AG04449 (cell line): ENCODE measurements at regions of chr12 and their contacts with region 1.

Region 1: DNA sequence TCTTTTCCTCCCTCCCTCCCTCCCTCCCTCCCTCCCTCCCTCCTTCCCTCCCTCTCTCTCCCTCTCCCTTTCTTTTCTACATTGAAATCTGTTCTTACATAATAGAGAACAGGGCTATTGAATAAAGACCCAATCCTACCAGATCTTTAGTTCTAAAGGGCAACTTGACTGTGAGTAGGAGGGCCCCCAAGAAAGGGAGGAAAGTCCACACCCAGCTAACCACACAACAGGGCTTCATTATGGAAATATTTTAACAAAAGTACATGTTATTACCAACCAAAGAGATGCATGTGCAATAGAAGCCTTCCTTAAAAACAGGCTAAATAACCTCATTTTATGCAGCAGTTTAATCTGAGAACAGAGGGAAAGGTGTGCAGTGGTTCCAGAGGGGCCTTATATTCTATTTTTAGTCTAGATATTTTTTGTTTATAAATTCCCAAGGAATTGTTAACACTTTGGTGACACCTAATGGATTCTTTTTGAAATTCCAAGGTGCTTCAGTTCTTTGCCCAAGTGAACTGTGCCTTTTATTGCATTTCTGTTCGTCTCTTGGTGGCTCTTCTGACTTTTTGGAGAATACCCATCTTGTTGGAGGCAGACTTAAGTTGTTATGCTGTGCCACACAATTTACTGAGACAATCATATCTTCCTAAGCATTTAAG is 63.0 kb downstream of the GNS start:
- DNase-seq: no peak
- H3K4me3 ChIP-seq: no peak overlapping the region
- CTCF ChIP-seq: no peak

Region 2: DNA sequence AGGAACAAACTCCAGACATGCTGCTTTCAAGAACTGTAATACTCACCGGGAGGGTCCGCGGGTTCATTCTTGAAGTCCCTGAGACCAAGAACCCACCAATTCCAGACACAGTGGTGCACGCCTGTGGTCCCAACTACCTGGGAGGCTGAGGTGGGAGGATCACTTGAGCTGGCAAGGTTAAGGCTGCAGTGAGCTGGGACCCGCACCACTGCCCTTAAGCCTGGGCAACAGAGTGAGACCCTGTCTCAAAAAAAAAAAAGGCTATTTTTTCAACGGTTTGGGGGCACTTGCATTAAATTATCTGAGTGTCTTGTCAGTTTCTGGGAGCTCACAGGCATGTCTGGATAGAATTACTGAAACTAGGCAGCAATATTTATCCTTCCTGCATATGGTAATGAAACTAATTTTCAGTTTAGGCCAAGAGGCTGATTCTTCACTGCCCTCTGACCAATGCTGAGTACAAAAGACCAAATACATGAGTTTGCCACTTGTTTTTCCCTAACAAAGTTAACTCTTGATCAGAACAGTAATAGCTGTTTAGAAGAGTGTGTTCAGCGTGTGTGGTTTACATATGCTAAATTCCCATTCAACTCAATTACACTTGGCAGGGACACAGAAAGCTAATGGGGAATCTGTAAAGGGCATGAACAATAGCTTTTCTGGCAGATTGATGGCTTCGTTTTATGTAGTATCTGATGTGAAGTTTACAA is 151.7 kb before region 1 on chr12:
- CTCF ChIA-PET with region 1: interaction called, 481 read pairs
- POLR2A ChIA-PET with region 1: no interaction called
- DNase-seq: no peak
- H3K4me3 ChIP-seq: no peak overlapping the region
- CTCF ChIP-seq: no peak

Region 3: GRCh38 chr12:64569923-64570691 is 126.1 kb before region 1 on chr12:
- CTCF ChIA-PET with region 1: interaction called, 10 read pairs
- POLR2A ChIA-PET with region 1: no interaction called
- DNase-seq: no peak
- H3K4me3 ChIP-seq: no peak overlapping the region
- CTCF ChIP-seq: no peak

Region 4: GRCh38 chr12:64669270-64669842 is 26.9 kb before region 1 on chr12:
- CTCF ChIA-PET with region 1: interaction called, 13 read pairs
- POLR2A ChIA-PET with region 1: no interaction called
- DNase-seq: no peak
- H3K4me3 ChIP-seq: no peak overlapping the region
- CTCF ChIP-seq: no peak

Region 5: DNA sequence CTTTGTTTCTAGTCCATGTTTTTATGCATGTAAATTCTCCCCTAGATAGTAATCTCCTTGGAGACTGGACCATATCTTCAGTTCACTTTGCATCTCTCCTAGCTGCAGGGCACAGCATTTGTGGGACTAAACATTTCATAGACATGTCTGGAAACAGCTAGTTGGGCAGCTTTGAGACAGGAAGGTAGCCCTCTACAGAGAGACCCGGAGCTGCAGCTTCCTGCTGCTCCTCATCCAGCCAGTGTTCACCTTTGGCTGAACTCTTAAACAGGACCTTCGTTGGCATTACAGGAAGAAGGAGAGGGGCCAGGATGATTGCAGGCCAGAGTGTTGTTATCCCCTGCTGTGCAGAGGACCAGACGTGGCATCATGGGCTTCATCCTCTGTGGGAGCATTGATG is 10.1 kb after region 1 on chr12:
- CTCF ChIA-PET with region 1: interaction called, 38 read pairs
- POLR2A ChIA-PET with region 1: no interaction called
- DNase-seq: no peak
- H3K4me3 ChIP-seq: no peak overlapping the region
- CTCF ChIP-seq: no peak